ENCODE measurements at regions of chr14 and their contacts with region 1.

Region 1: GRCh38 chr14:72332046-72332445 is 399.8 kb downstream of the RGS6 start:
- DNase-seq: peak; percentile 8
- H3K4me3 ChIP-seq: no peak overlapping the region
- H3K27ac ChIP-seq: no peak overlapping the region
- H3K4me1 ChIP-seq: no peaks in the 10 kb centered on the region
- H3K27me3 ChIP-seq: no peaks in the 10 kb centered on the region
- CTCF ChIP-seq: no peak

Region 2: DNA sequence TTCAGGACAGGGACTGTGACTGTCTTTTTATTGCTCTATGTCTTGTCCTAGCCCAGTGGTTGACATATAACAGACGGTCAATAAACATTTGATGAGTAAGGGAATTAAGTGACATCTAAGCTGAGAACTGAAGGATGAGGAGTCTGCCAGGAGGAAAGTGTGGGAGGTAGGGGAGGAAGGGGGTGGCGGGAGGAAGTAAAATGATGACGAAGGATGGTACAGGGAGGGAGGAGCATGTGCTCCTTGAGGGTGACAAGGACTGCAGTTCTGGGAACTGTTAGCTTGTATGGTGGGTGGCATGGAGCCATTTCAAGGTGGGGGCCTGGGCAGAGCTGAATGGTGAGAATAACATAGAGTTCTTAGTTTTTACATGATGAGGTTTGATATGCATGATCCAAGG is 335.4 kb before region 1 on chr14:
- CTCF ChIA-PET with region 1: interaction called, 14 read pairs
- POLR2A ChIA-PET with region 1: no interaction called
- intact Hi-C with region 1: no loop called
- DNase-seq: no peak
- H3K4me3 ChIP-seq: no peak overlapping the region
- H3K27ac ChIP-seq: no peak overlapping the region
- H3K4me1 ChIP-seq: no peaks in the 10 kb centered on the region
- H3K27me3 ChIP-seq: no peaks in the 10 kb centered on the region
- CTCF ChIP-seq: no peak

Measured in A673 (cell line).